A673 (cell line): ENCODE measurements at regions of chr12 and their contacts with region 1.

Region 1: DNA sequence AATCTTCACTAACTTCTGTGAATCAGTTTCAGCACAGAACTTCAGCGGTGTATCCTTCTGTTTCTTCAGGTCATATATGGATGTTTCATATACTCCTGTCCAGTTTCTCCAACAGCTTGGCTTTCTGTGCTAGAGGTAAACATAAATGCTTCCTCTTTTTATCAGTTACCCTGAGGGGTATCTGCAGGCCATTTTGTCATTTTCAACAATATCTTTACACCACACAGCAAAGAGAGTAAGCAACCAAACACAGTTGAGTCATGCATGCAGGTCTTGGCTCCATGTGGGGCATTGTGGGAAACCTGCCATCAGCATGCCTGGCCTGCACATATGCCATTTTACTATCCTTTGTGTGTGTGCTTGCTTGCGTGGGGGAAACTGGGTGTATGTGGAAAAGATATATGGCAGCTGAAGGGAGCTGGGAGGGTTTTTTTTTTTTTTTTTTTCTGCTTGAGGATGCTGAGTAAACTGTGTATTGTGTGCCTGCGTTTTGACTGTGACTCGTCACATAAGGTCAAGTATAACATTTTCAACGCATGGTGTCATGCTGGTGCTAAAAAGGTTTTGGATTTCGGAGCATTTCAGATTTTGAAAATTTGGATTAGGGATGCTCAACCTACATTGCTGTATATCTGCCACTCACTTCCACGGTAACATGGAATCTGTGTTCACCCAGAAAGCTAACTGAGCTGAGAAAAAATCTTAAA is 56.1 kb upstream of the YARS2 start:
- DNase-seq: no peak
- H3K4me3 ChIP-seq: no peak overlapping the region
- H3K27ac ChIP-seq: no peak overlapping the region
- H3K4me1 ChIP-seq: no peaks in the 10 kb centered on the region
- H3K27me3 ChIP-seq: no peaks in the 10 kb centered on the region
- CTCF ChIP-seq: no peak

Region 2: GRCh38 chr12:32780071-32780470 is 31.8 kb before region 1 on chr12:
- CTCF ChIA-PET with region 1: no interaction called
- POLR2A ChIA-PET with region 1: no interaction called
- intact Hi-C with region 1: loop called (anchors 1 kb)
- DNase-seq: no peak
- H3K4me3 ChIP-seq: no peak overlapping the region
- H3K27ac ChIP-seq: no peak overlapping the region
- H3K4me1 ChIP-seq: no peaks in the 10 kb centered on the region
- H3K27me3 ChIP-seq: peaks cover 29% of the 10 kb centered on the region
- CTCF ChIP-seq: no peak

Region 3: GRCh38 chr12:32839828-32840227 is 28.0 kb after region 1 on chr12:
- CTCF ChIA-PET with region 1: no interaction called
- POLR2A ChIA-PET with region 1: no interaction called
- intact Hi-C with region 1: loop called (anchors 2 kb)
- DNase-seq: no peak
- H3K4me3 ChIP-seq: no peak overlapping the region
- H3K27ac ChIP-seq: no peak overlapping the region
- H3K4me1 ChIP-seq: no peaks in the 10 kb centered on the region
- H3K27me3 ChIP-seq: no peaks in the 10 kb centered on the region
- CTCF ChIP-seq: no peak